T-cell (primary cell): ENCODE measurements at regions of chr10 and their contacts with region 1.

Region 1: DNA sequence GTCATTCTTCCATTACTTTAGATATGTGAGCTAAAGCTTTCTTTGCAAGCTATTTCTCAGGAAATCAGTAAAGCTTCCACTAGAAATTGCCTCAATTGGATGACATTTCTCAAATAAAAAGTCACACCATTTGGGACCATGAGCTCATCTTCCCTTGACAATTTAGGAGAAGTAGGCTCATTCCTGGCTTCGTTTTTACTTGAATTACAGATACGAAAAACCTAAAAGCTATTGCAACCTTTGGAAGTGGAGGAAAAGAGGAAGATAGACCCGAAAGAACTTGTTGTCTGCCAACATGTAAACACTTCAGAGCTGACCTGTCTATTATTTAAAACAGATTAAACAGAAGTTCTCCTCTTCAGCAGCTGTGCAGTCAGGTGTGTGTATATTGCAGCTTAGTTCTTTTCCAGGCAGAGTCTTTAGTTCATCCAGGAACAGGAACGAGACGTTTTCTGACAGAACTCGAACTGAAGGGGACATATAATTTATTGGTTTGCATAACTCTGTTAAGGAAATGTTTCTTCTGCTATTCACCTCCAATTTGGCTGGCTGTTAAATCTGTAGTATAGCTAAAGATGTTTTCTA is 43.1 kb upstream of the ST8SIA6 start:
- DNase-seq: no peak
- ATAC-seq: no peak
- H3K4me3 ChIP-seq: no peak overlapping the region
- H3K4me3 Mint-ChIP-seq: no peak overlapping the region
- H3K27ac ChIP-seq: no peak overlapping the region
- H3K27ac Mint-ChIP-seq: no peak overlapping the region
- H3K4me1 ChIP-seq: peaks cover 0 to 2% of the 10 kb centered on the region in 2 experiments
- H3K4me1 Mint-ChIP-seq: peaks cover 0 to 3% (median 2%) of the 10 kb centered on the region in 3 donors
- H3K27me3 ChIP-seq: peaks cover 0 to 3% of the 10 kb centered on the region in 2 experiments
- H3K27me3 Mint-ChIP-seq: peaks cover 0 to 5% of the 10 kb centered on the region in 2 donors

Region 2: GRCh38 chr10:17693009-17693408 is 195.5 kb after region 1 on chr10:
- CTCF ChIA-PET with region 1: no interaction called
- POLR2A ChIA-PET with region 1: interaction called in 1 of 2 experiments, 16 read pairs
- DNase-seq: no peak
- ATAC-seq: no peak
- H3K4me3 ChIP-seq: no peak overlapping the region
- H3K4me3 Mint-ChIP-seq: no peak overlapping the region
- H3K27ac ChIP-seq: no peak overlapping the region
- H3K27ac Mint-ChIP-seq: peak overlapping the region in 1 of 2 donors; percentile 7
- H3K4me1 ChIP-seq: no peaks in the 10 kb centered on the region
- H3K4me1 Mint-ChIP-seq: peaks cover 0 to 4% (median 3%) of the 10 kb centered on the region in 3 donors
- H3K27me3 ChIP-seq: no peaks in the 10 kb centered on the region
- H3K27me3 Mint-ChIP-seq: no peaks in the 10 kb centered on the region